HAP-1 (cell line): ENCODE measurements at regions of chr12 and their contacts with region 1.

Region 1: DNA sequence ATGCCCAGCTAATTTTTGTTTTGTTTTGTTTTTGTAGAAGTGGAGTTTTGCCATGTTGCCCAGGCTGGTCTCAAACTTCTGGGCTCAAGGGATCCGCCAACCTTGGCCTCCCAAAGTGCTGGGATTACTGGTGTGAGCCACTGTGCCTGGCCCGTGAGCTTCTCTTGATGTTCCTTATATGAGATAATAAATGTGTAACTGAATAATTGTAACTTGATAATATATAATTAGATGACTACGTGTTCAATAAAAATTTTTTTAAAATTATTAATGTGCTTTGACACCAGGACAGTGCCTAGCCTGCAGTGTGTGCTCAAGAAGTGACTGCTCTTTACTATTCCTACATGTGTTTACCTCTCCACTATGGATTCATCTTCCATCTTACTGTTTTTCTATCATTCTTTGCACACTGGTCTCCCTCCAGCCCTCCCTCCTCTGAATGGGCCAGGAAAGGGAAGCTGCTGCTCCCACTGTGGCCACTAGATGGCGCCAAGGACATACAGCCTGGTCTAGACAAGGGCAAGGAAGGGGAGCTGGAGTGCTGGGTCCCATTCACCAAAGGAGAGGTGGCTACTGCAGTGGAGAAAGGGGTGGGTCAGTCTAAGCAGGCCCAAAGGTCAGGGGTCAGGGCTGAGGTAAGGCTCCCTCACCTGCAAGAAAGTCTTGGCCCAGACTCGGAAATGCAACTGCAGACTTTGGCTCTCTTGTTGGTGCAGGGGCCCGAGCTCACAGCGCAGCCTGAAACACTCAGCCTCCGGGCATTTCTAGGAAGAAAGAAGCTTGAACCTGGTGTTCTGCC is 14.7 kb upstream of the ZNF385A start:
- DNase-seq: peak; percentile 57 to 89
- H3K4me3 ChIP-seq: no peak overlapping the region
- H3K4me1 ChIP-seq: no peaks in the 10 kb centered on the region
- H3K27me3 ChIP-seq: no peaks in the 10 kb centered on the region

Region 2: DNA sequence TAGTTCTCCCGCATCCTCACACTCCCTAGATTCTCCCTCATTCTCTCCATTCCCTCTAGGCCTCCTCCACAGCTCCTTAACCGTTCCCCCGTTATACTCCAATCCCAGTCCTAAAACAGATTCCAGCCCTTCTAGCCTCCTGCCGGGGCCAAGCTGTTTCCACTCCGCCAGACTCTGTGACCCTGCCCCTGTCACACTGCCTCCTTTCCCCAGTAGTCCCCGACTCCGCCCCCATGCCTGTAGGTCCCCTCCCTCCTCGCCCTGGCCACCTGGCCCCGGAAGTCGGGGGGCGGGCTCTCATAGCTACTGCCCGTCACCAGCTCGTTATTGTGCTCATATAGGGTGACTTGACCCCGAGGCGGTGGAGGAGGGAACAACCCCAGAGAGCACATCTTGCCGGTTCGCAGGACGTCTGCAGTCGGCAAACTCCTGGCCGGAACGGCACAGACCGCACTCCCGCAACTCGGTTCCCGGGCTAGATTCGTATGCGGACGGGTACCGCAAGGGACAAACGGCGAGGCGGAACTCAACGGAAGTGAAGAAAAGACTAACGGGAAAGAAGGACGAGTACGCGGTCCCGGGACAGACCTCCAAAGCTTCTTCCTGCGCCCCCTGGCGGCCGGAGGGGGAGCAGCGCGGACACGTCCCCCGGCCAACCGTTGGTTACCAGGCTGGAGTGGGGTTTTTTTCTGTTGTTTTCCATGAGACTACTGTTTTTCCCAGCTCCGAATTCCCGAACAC is 1078.0 kb before region 1 on chr12 and contains the start of gene AAAS:
- in situ Hi-C with region 1: no loop called
- DNase-seq: peak; percentile 94 to 99
- H3K4me3 ChIP-seq: peak within 1 kb of the TSS; percentile 96
- H3K4me1 ChIP-seq: peaks cover 18% of the 10 kb centered on the region
- H3K27me3 ChIP-seq: no peaks in the 10 kb centered on the region

Region 3: DNA sequence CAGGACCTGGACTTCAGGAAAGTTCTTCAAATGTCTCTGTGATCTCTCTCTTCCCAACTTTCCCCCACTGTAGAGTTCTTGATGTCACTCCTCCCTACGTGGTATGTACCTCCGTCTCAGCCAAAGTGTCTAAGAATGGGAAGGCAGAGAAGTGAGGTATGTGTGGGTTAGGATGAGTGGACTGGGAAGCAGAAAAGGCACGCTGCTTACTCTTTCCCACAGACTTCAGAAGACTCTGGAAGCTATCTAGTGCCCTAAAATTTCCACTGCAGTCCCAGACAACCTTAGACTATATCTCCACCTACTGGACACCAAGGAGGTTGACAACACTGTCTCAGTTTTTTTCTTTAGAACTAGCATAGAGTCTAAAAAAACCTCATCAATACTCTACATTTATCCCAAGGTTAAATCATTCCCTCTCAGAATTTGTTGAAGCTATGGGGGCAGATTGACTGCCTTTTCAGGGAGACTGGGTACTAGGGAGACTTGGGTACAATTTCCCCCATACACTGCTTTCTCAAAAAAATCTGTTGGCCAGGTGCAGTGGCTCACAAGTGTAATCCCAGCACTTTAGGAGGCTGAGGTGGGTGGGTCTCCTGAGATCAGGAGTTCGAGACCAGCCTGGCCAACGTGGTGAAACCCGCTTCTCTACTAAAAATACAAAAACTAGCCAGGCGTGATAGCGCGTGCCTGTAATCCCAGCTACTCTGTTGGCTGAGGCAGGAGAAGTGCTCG is 40.5 kb after region 1 on chr12:
- in situ Hi-C with region 1: loop called (anchors 5 kb)
- DNase-seq: peak in 1 of 2 experiments; percentile 80
- H3K4me3 ChIP-seq: no peak overlapping the region
- H3K4me1 ChIP-seq: 0 out of 2 replicates have a peak, but pooled peaks cover 7% of the 10 kb centered on the region
- H3K27me3 ChIP-seq: no peaks in the 10 kb centered on the region

Region 4: DNA sequence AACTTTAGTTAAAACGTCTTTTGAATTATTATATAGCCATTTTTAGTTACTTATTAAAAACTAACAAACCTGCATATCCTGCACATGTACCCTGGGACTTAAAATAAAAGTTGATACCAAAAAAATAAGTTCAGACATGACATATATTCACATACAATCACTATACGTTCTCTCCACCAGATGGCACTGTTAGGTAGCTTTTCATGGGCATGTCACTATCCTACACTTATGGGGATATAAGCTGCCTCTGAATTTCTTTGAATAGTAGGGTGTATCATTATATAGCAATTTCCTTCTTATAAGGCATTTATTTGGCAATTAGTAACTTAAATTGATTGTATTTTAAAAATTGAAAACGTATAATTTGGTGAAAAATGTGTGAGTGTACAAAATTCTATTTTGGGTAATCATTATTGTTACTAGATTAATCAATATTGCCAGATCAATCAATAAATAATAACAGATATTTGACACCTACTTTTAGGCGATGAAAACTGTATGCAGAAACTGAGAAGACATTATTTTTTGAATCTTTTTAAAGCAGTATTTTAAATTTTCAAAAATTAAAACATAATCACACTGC is 789.9 kb after region 1 on chr12:
- in situ Hi-C with region 1: no loop called
- DNase-seq: peak; percentile 64 to 70
- H3K4me3 ChIP-seq: no peak overlapping the region
- H3K4me1 ChIP-seq: no peaks in the 10 kb centered on the region
- H3K27me3 ChIP-seq: 0 out of 2 replicates have a peak, but pooled peaks cover 2% of the 10 kb centered on the region